ENCODE measurements at regions of chr16 and their contacts with region 1.

Region 1: DNA sequence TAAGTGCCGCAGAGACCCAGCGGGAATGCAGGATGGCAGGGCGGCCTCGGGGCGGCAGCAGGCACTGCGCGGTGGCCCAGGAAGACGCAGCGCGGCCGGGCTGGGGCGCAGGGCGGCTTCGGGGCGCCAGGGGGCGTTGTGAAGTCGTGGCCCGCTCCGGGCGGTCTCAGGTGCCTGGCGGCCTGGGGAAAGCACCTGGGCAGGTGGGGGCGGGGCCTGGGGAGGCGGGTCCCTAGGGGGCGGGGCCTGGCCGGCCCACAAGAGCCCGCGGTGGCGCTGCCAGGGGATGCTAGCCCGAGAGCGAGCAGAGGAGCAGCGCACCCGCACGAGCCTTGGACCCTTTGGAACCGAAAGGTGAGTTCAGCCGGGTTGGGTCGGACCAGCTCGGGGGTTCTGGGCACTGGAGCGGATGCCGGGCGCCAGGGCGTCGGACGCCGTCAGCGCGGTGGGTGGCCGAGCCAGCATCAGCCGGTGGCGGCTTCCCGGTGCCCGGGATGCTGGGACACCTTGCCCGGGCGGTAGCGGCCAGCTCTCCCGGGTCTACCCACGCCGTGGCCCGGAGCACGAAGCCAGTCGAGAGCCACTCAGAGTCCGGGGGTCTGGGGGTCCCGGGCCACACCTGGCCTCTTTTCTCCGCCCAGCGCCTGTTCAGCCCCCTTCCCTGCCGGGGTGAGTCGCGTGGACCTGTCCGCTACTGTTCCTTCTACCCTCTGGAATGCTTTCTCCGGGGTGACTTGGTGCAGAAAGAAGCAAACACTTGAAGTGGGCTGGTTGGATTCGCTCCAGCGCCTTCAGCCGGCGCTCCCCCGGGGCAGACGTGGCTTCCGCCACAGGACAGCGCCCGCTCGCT is at the start of gene SCNN1G:
- DNase-seq: peak; percentile 88
- H3K4me3 ChIP-seq: peak within 1 kb of the TSS; percentile 68 to 87 (median 69)
- H3K27ac ChIP-seq: no peak within 1 kb of the TSS
- H3K4me1 ChIP-seq: peaks cover 14% of the 10 kb centered on the region
- H3K27me3 ChIP-seq: no peaks in the 10 kb centered on the region
- CTCF ChIP-seq: peak; percentile 94 to 97
- total RNA-seq, gene SCNN1G: 1.2 to 4.7 TPM

Region 2: DNA sequence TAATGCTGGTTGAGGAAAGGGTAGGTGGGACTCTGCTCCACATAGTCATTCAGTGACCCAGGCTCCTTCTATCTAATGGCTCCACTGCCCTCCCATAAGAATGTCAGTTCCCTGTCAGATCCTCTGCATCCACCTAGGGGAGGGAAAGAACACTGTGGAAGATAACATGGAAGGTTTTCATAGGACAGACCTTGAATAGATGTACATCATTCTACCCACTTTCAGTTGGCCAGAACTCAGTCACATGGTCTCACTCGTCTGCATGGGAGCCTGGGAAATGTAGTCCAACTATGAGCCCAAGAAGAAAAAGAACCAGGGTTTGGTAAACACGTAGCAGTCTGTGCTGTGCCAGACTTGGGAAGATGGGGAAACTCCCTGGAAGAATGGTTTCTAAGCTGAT is 92.3 kb after region 1 on chr16:
- CTCF ChIA-PET with region 1: interaction called, 16 read pairs
- dilution Hi-C with region 1: no loop called
- in situ Hi-C with region 1: no loop called
- intact Hi-C with region 1: no loop called
- DNase-seq: peak; percentile 40
- H3K4me3 ChIP-seq: no peak overlapping the region
- H3K27ac ChIP-seq: no peak overlapping the region
- H3K4me1 ChIP-seq: peaks cover 16% of the 10 kb centered on the region
- H3K27me3 ChIP-seq: no peaks in the 10 kb centered on the region
- CTCF ChIP-seq: no peak

Region 3: DNA sequence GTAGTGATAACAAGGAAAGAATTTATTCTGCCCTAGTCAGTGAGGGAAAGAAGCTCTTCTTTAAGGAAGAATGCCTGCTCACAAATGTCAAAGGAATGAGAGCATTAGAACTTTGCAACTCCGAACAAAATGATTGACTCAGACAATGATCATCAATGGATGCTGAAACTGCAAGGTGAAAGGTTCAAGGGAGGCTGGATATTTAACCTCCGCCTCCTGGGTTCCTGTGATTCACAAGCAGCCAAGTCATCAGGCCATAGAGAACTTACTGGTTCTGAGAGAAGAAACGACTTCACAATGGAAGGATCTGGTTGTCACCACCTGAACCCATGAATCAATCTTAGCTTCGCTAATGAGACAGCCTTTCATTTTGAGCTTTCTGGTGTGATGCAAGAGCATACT is 103.4 kb after region 1 on chr16:
- CTCF ChIA-PET with region 1: no interaction called
- dilution Hi-C with region 1: no loop called
- in situ Hi-C with region 1: no loop called
- intact Hi-C with region 1: loop called (anchors 1 kb)
- DNase-seq: peak; percentile 97
- H3K4me3 ChIP-seq: no peak overlapping the region
- H3K27ac ChIP-seq: peak overlapping the region; percentile 69
- H3K4me1 ChIP-seq: peaks cover 46% of the 10 kb centered on the region
- H3K27me3 ChIP-seq: no peaks in the 10 kb centered on the region
- CTCF ChIP-seq: no peak

Measured in mammary epithelial cell (primary cell).